Posterior cingulate gyrus (tissue), 11 donors: ENCODE measurements at regions of chr1 and their contacts with region 1.

Region 1: DNA sequence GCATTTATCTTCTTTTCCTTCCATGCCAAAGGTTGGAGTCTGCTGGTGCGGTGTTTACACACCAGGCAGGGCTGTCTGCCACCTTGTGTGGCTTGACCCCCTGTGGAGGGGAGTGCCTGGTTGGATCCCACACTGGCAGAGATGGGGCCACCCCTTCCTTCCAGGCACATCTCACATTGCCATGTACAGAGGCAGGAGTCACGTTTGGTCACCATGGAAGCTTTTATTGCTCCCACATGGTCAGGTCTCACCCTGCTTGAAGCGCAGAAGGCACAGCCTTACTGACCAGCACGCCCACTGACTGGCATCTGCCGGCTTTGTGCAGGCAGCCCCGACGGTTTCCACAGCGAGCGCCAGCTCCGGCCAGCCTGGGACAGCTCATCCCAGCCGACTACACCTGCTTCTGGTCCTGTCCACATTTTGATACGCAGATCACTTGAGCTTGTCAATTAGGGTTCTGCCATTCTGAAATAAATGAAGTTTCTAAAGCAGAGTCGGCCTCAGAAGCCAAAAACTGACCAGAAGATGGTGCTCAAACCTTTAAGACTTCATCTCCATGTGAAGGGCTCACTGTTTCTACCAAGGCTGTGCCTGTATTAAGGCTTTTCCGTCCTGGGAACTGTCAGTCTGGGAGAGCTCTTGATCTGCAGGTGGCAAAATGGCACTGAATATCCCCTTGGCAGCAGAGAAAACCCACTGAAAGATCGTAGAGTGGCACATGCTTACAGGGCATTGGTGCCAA is 35.6 kb upstream of the EPHA8 start:
- DNase-seq: peak in 3 of 10 donors; percentile 59 to 70 (median 66)

Region 2: GRCh38 chr1:21909787-21910503 is 617.8 kb before region 1 on chr1:
- intact Hi-C with region 1: no loop called
- DNase-seq: no peak

Region 3: GRCh38 chr1:22641906-22642636 is 114.3 kb after region 1 on chr1:
- intact Hi-C with region 1: loop called (anchors 2 kb)
- DNase-seq: peak; percentile 70 to 97 (median 86)